Activated CD4-positive, alpha-beta T cell treated with anti-CD3 and anti-CD28 coated beads for 36 hours (primary cell): ENCODE measurements at regions of chr1 and their contacts with region 1.

Region 1: DNA sequence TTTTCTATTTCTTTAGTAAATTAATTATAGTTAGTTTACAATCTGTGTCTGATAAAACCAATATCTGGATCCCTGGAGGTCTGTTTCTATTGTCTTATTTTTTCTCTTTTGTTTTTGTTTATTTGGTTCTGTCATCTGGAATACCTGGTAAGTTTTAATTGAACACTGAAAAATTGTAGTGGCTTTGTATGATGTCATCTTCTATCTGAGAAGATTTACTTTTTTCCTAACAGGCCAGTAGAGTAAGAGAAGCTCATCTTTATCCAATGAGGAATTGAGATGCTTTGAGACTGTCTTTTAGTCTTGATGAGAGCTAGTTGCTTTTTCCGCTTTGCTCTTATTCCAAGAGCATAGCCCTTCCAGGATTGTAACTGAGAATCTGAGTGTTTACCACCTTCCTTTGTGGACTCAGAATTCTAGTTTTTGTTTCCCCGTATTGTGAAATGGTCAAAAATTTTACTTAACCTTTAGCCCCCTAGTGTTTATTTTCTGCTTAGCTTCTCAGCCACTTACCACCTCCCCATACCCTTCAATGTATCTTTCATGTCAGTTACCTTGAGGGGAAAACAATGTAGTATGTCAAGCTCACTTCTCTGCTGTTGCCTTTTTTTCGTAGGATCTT is 25.0 kb downstream of the PTGFRN start:
- DNase-seq: no peak
- ATAC-seq: no peak
- H3K4me3 Mint-ChIP-seq: no peak overlapping the region
- H3K27ac Mint-ChIP-seq: peak overlapping the region; percentile 77
- H3K4me1 Mint-ChIP-seq: peaks cover 7% of the 10 kb centered on the region
- H3K27me3 Mint-ChIP-seq: no peaks in the 10 kb centered on the region

Region 2: DNA sequence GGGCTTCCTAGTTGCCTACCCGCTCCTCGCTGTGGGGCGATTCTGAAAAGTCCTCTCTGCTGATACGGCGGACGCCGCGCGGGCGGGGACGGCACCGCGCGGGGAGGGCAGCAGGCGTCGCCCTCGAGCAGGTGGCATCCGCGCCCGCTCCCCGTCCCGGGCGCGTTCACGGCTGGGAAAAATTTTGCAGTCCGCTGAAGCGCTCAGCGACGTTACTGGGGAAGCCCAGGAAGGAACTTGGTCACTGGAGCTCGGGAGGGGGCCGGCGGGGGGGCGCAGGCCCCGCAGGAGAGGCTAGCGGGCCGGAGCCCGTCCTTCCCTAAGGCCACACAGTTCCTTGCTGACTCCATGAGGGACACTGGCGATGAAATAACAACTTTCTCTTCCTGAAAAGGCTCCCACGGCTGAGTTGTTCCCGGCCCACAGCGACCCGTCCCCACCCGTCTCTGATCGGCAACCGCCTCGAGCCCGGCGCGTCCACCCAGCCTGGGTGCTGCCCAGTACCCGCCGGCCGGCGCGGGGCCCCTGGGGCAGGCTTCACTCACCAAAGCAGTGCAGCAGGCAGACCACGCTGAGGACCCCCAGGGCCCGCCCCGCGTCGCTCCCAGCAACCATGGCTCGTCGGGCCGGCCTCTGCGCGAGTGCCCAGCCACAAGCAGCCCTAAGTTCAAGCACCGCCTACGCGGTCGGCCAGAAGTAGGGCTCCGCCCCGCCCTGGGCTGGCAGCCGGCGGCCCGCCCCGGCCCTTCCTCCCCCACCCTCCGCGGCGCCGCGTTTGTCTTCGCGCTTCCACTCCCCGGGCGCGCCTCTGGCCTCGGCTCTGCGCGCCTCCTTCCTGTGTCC is 364.1 kb before region 1 on chr1 and contains the start of gene CD58:
- CTCF ChIA-PET with region 1: interaction called, 4 read pairs
- POLR2A ChIA-PET with region 1: interaction called, 3 read pairs
- intact Hi-C with region 1: loop called in 1 of 2 experiments (anchors 5 kb)
- DNase-seq: peak; percentile 93
- ATAC-seq: peak; percentile 77
- H3K4me3 Mint-ChIP-seq: peak within 1 kb of the TSS; percentile 91
- H3K27ac Mint-ChIP-seq: peak within 1 kb of the TSS; percentile 87
- H3K4me1 Mint-ChIP-seq: peaks cover 64% of the 10 kb centered on the region
- H3K27me3 Mint-ChIP-seq: peaks cover 8% of the 10 kb centered on the region
- total RNA-seq, gene CD58: 12.4 to 16.0 TPM

Region 3: GRCh38 chr1:116769561-116769977 is 165.1 kb before region 1 on chr1:
- CTCF ChIA-PET with region 1: interaction called, 3 read pairs
- POLR2A ChIA-PET with region 1: interaction called, 5 read pairs
- intact Hi-C with region 1: loop called (anchors 5 kb)
- DNase-seq: peak; percentile 86
- ATAC-seq: peak; percentile 53
- H3K4me3 Mint-ChIP-seq: peak overlapping the region; percentile 93
- H3K27ac Mint-ChIP-seq: peak overlapping the region; percentile 100
- H3K4me1 Mint-ChIP-seq: peaks cover 96% of the 10 kb centered on the region
- H3K27me3 Mint-ChIP-seq: no peaks in the 10 kb centered on the region

Region 4: GRCh38 chr1:116847688-116848531 is 86.8 kb before region 1 on chr1:
- CTCF ChIA-PET with region 1: interaction called, 3 read pairs
- POLR2A ChIA-PET with region 1: no interaction called
- intact Hi-C with region 1: loop called in 1 of 2 experiments (anchors 5 kb)
- DNase-seq: peak; percentile 57
- ATAC-seq: peak; percentile 99
- H3K4me3 Mint-ChIP-seq: no peak overlapping the region
- H3K27ac Mint-ChIP-seq: peak overlapping the region; percentile 19
- H3K4me1 Mint-ChIP-seq: peaks cover 32% of the 10 kb centered on the region
- H3K27me3 Mint-ChIP-seq: peaks cover 2% of the 10 kb centered on the region

Region 5: GRCh38 chr1:116881879-116882520 is 52.7 kb before region 1 on chr1:
- CTCF ChIA-PET with region 1: interaction called, 4 read pairs
- POLR2A ChIA-PET with region 1: no interaction called
- intact Hi-C with region 1: loop called in 1 of 2 experiments (anchors 5 kb)
- DNase-seq: peak; percentile 72
- ATAC-seq: peak; percentile 77
- H3K4me3 Mint-ChIP-seq: no peak overlapping the region
- H3K27ac Mint-ChIP-seq: no peak overlapping the region
- H3K4me1 Mint-ChIP-seq: peaks cover 14% of the 10 kb centered on the region
- H3K27me3 Mint-ChIP-seq: no peaks in the 10 kb centered on the region

Region 6: GRCh38 chr1:116951200-116951935 is 16.7 kb after region 1 on chr1:
- CTCF ChIA-PET with region 1: interaction called, 10 read pairs
- POLR2A ChIA-PET with region 1: no interaction called
- intact Hi-C with region 1: no loop called
- DNase-seq: no peak
- ATAC-seq: no peak
- H3K4me3 Mint-ChIP-seq: no peak overlapping the region
- H3K27ac Mint-ChIP-seq: no peak overlapping the region
- H3K4me1 Mint-ChIP-seq: no peaks in the 10 kb centered on the region
- H3K27me3 Mint-ChIP-seq: no peaks in the 10 kb centered on the region

Region 7: DNA sequence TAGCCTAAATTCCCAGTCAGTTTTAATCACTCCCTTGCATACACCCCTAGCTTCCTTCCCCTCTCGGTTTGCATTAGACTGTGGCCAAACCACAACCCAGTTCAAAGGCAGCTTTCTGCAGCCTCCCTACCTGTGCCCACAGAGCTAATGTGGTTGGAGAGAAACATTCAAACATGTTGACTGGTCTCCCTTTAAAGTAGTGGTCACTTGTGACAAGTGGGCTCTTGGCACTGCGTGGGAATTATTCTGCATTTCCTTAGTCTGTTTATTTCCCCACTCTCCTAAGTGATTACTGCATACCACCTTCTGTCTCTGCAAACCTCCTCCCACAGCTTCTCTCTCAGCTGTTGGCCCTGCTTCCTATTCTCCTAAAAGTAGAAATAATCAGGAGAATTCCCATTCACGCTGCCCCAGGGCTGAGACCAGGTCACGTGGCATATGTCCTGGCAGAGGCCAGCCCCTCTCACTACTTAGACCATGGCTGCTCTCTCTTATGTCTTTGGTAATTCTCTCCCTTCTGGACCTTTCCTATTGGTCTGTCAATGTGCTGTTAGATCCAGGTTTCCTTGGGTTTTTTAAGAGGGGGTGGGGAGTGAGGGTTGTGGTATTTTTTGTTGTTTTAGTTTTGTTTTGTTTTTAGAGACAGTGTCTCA is 28.4 kb after region 1 on chr1:
- CTCF ChIA-PET with region 1: no interaction called
- POLR2A ChIA-PET with region 1: no interaction called
- intact Hi-C with region 1: no loop called
- DNase-seq: peak; percentile 25
- ATAC-seq: peak; percentile 69
- H3K4me3 Mint-ChIP-seq: no peak overlapping the region
- H3K27ac Mint-ChIP-seq: no peak overlapping the region
- H3K4me1 Mint-ChIP-seq: no peaks in the 10 kb centered on the region
- H3K27me3 Mint-ChIP-seq: no peaks in the 10 kb centered on the region